CD4-positive, alpha-beta T cell (primary cell): ENCODE measurements at regions of chr4 and their contacts with region 1.

Region 1: GRCh38 chr4:86895692-86896488 is 3.7 kb upstream of the C4orf36 start:
- DNase-seq: peak in 4 of 14 experiments; percentile 8 to 70 (median 67)
- ATAC-seq: peak; percentile 54
- H3K4me3 ChIP-seq: no peak overlapping the region
- H3K4me3 Mint-ChIP-seq: no peak overlapping the region
- H3K27ac ChIP-seq: no peak overlapping the region
- H3K27ac Mint-ChIP-seq: no peak overlapping the region
- H3K4me1 ChIP-seq: peaks cover 9% of the 10 kb centered on the region
- H3K4me1 Mint-ChIP-seq: peaks cover 3% of the 10 kb centered on the region
- H3K27me3 ChIP-seq: peaks cover 2 to 9% of the 10 kb centered on the region in 2 experiments
- H3K27me3 Mint-ChIP-seq: peaks cover 17% of the 10 kb centered on the region
- CTCF ChIP-seq: peak; percentile 87

Region 2: DNA sequence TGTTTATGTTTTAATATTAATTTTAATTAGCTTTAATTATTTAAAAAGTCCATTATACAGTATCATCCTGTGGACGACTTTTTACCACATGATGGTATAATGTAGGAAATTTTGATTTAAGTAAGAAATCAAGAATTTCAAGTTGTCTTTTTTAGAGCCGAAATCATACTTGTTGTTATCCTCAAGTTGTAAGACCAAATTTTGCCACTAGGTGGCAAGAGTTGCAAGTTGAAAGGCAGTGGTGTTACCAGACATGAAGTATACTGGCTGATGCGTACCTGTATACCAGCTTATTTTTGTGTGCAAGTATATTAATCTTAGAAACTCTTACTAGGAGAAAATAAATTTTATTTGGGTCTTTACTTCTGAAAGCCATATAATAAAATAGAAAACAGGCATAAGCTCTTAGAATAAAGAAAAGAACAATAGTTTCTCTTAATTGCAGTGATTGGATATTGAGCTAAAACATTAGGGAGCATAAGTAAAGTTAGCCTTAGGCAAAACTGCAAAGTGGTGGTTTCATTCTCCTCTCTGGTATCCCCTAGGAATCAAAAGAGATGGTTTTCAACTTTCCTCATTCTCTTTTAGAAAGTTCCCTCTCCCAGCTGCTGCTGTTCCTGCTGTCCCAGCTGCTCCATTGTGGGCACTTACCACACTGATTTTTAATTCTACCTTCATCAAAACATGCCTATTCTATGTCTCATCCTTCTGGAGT is 1811.4 kb before region 1 on chr4:
- CTCF ChIA-PET with region 1: no interaction called
- POLR2A ChIA-PET with region 1: no interaction called
- intact Hi-C with region 1: loop called in 1 of 2 experiments (anchors 10 kb)
- DNase-seq: peak in 4 of 14 experiments; percentile 6 to 46 (median 32)
- ATAC-seq: no peak
- H3K4me3 ChIP-seq: no peak overlapping the region
- H3K4me3 Mint-ChIP-seq: no peak overlapping the region
- H3K27ac ChIP-seq: no peak overlapping the region
- H3K27ac Mint-ChIP-seq: no peak overlapping the region
- H3K4me1 ChIP-seq: no peaks in the 10 kb centered on the region
- H3K4me1 Mint-ChIP-seq: no peaks in the 10 kb centered on the region
- H3K27me3 ChIP-seq: no peaks in the 10 kb centered on the region
- H3K27me3 Mint-ChIP-seq: no peaks in the 10 kb centered on the region
- CTCF ChIP-seq: peak; percentile 54

Region 3: DNA sequence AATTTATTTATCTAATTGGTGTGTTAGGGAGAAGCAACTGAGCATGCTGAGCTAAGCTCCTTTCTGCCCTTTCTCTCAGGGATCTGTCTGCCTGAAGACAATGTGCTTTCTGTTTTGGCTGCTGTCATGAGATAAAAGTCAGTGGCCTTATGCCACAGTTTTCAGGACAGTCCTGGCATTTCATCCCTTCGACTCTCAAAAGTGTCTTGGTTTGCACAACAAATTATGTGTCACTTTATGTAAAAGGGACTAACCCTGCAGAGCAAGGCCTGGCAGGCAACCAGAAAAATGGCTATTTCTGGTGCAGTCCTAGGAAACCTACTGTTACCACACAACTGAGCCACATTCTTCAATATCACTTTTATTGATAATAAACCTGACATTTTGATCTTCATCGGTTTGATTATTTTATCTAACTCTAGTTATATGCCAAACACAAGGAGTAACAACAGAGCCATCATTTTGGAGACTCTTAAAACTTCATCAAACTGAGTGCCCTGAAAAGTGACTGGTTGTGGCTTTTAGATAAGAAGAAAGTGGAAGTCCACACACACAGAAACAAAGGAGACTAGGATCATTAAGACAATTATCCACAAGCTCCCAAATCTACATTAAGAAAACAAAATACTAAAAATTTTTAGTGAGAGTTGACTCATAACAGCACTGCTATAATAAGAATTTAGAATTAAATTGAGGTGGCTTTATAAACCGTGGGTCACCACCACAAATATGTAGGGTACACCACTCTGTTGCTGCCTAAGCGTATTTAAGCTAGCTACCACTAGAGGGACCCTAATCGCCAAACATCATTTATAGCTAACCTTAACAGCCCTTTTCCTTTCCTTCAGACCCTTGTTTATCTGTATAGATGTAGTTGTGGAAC is 397.7 kb before region 1 on chr4:
- CTCF ChIA-PET with region 1: interaction called, 5 read pairs
- POLR2A ChIA-PET with region 1: no interaction called
- intact Hi-C with region 1: loop called (anchors 1 kb)
- DNase-seq: peak in 3 of 14 experiments; percentile 27 to 56 (median 52)
- ATAC-seq: peak; percentile 48
- H3K4me3 ChIP-seq: no peak overlapping the region
- H3K4me3 Mint-ChIP-seq: no peak overlapping the region
- H3K27ac ChIP-seq: no peak overlapping the region
- H3K27ac Mint-ChIP-seq: no peak overlapping the region
- H3K4me1 ChIP-seq: no peaks in the 10 kb centered on the region
- H3K4me1 Mint-ChIP-seq: no peaks in the 10 kb centered on the region
- H3K27me3 ChIP-seq: no peaks in the 10 kb centered on the region
- H3K27me3 Mint-ChIP-seq: peaks cover 11% of the 10 kb centered on the region
- CTCF ChIP-seq: peak; percentile 84